Left cardiac atrium (tissue), 4 donors: ENCODE measurements at regions of chr7 and their contacts with region 1.

Region 1: DNA sequence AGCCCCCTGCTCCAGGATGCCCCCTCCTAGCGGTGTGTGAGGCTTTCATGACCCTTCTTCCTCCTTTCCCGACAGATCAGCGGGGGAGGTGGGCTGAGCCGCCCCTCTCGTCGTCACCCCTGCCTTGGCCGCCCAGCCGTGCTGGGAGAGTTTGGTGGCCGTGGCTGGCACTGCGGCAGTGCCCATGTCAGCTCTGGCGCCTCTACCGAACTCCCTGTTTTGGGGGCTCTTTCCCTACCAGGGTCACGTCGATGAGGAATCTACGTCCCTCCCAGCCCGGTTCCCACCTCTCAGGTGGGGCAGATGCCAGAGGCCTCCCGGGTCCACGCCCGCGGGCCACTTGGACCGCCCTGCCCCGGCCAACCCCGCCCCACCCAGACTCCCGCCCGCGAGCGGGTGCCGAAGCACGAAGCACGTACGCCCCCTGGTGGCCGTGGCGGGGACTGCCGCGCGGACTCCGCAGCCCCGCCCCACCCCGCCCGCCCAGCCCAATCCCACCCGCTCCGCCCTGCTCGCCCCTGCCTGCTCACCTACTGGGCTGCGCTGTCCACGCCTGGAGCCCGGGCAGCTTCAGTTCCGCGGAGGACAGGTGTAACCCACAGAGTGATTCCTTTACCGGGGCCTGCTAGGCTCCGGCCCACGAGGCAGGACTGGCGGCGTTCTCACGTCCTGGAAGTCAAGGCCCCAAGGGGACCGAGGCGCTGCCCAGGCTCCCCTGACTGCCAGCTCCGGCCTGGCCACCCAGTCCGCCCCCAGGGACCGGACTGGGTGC is 127.1 kb downstream of the UBE2H start:
- DNase-seq: peak; percentile 90
- ATAC-seq: peak; percentile 88 to 89

Region 2: DNA sequence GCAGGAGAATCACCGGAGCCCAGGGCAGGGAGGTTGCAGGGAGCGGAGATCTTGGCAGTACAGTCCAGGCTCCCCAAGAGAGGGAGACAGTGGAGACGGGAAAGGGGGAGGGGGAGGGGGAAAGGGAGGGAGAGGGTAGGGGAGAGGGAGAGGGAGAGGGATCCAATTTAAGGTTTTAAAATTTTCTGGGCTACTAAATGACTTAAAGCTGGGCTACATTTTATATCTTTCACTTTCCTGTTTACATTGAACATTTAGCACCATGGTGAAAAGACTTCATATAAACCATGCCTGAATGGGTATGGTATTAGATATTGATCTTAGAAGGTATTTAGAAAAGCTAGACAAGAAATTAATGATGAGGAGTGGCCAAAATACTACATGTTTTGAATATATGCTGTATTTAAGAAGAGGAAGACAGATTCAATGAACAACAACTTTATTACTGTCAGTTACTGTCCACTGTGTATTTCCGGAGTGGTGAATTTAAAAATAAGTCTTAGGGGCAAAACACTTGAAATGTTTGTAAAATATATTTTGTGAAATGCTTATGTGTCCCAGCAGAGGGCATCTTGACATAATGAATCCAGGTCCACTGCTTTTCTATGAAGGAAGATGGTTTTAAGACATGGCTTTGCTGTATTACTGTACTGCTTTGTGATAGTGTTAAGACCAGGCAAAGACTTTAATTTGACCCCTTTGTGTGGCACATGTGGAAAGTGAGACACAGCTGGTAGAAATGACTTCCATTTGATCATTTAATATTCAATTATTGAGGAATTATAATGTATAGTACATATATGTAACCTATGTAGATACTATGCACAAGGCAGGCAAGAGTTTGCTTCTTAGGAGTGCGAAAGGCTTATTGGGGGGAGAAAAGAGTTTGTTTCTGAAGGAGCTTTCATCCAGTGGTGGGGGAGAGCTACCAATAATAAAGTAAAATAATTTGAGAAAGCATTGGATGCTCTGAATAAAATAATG is 161.4 kb before region 1 on chr7:
- intact Hi-C with region 1: loop called (anchors 5 kb)
- DNase-seq: no peak
- ATAC-seq: peak; percentile 50 to 71

Region 3: GRCh38 chr7:129952653-129953560 is 127.2 kb after region 1 on chr7 and contains the start of gene UBE2H:
- intact Hi-C with region 1: loop called in 1 of 2 experiments (anchors 5 kb)
- DNase-seq: peak; percentile 91
- ATAC-seq: peak; percentile 91 to 93
- total RNA-seq, gene UBE2H: 65.5 to 77.8 TPM

Region 4: GRCh38 chr7:130010689-130011412 is 185.2 kb after region 1 on chr7:
- intact Hi-C with region 1: loop called (anchors 5 kb)
- DNase-seq: peak; percentile 72
- ATAC-seq: peak; percentile 71 to 76

Region 5: GRCh38 chr7:130365511-130366441 is 540.1 kb after region 1 on chr7:
- intact Hi-C with region 1: no loop called
- DNase-seq: no peak
- ATAC-seq: no peak